Activated CD4-positive, alpha-beta T cell treated with anti-CD3 and anti-CD28 coated beads for 36 hours (primary cell): ENCODE measurements at regions of chr7 and their contacts with region 1.

Region 1: GRCh38 chr7:111083413-111083812 is 7.5 kb upstream of the LRRN3 start:
- DNase-seq: peak; percentile 60
- ATAC-seq: peak; percentile 84
- H3K4me3 Mint-ChIP-seq: peak overlapping the region; percentile 49
- H3K27ac Mint-ChIP-seq: peak overlapping the region; percentile 89
- H3K4me1 Mint-ChIP-seq: peaks cover 78% of the 10 kb centered on the region
- H3K27me3 Mint-ChIP-seq: no peaks in the 10 kb centered on the region

Region 2: GRCh38 chr7:110918949-110919548 is 164.4 kb before region 1 on chr7:
- CTCF ChIA-PET with region 1: no interaction called
- POLR2A ChIA-PET with region 1: no interaction called
- intact Hi-C with region 1: loop called in 1 of 2 experiments (anchors 1 kb)
- DNase-seq: no peak
- ATAC-seq: peak; percentile 68
- H3K4me3 Mint-ChIP-seq: no peak overlapping the region
- H3K27ac Mint-ChIP-seq: no peak overlapping the region
- H3K4me1 Mint-ChIP-seq: peaks cover 13% of the 10 kb centered on the region
- H3K27me3 Mint-ChIP-seq: peaks cover 3% of the 10 kb centered on the region

Region 3: DNA sequence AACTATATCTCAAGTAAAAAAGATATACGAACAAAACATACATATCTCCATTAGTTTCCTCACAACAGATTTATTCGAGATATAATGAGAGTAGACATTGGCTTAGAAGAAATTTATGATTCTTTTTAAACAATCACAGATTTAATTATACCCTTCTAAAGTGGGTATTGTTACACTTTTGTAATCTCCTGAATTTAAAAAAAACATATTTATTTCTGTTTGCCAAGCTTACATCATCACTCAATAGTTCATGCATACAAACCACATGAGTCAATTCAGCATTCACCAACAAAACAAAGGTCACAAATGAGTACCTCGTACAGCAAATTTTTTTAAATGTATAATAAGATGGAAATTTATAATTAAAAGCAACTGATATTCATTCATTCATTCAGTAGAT is 25.1 kb after region 1 on chr7:
- CTCF ChIA-PET with region 1: no interaction called
- POLR2A ChIA-PET with region 1: no interaction called
- intact Hi-C with region 1: no loop called
- DNase-seq: no peak
- ATAC-seq: no peak
- H3K4me3 Mint-ChIP-seq: no peak overlapping the region
- H3K27ac Mint-ChIP-seq: no peak overlapping the region
- H3K4me1 Mint-ChIP-seq: peaks cover 59% of the 10 kb centered on the region
- H3K27me3 Mint-ChIP-seq: no peaks in the 10 kb centered on the region